GM23248 (cell line): ENCODE measurements at regions of chr5 and their contacts with region 1.

Region 1: DNA sequence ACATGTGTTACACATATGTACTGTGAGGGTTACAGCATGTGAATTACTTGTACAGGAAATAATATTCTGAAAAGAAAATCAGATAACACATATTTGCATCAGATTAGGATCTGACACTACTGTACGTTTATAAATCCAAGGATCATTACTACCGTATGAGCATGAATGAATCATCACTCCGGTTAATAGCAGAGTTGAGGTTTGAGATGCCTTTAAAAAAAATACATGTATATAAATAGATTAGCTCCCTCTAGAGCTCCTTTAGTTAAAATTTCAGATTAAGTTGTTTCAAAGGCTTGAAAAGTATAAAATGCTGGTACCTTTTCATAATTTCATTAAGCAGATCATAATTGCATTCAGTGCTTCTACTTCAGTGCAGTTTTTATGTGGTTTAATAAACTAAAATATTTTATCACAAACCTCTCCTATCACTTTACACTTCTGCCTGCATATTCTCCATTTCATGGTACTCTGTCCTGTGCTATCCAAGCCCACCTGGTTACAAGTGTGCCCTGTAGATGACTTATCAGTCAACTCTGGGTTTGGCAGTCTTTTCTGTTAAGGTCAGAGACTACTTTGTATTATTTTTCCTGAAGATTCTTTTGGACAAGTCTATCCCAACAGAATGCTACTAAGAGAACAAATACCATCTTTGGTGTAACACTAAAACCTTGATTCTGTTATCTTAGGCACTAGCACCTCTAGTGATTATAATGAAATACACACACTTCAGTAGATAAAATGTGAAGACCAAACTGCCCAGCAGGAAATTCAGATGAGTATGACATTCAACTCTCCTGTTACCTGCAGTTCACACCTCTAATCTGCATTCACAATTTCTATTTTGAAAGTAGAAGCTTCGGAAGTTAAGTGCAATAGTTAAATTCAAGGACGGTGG is 48.0 kb upstream of the POU5F2 start:
- DNase-seq: peak; percentile 85
- H3K4me3 ChIP-seq: no peak overlapping the region
- H3K27ac ChIP-seq: no peak overlapping the region
- H3K4me1 ChIP-seq: peaks cover 22% of the 10 kb centered on the region
- H3K27me3 ChIP-seq: no peaks in the 10 kb centered on the region

Region 2: GRCh38 chr5:92687821-92688722 is 1101.3 kb before region 1 on chr5:
- in situ Hi-C with region 1: loop called (anchors 25 kb)
- DNase-seq: peak; percentile 41
- H3K4me3 ChIP-seq: peak overlapping the region; percentile 53
- H3K27ac ChIP-seq: no peak overlapping the region
- H3K4me1 ChIP-seq: peaks cover 15% of the 10 kb centered on the region
- H3K27me3 ChIP-seq: no peaks in the 10 kb centered on the region

Region 3: GRCh38 chr5:92909602-92909962 is 879.8 kb before region 1 on chr5:
- in situ Hi-C with region 1: loop called (anchors 25 kb)
- DNase-seq: peak; percentile 18
- H3K4me3 ChIP-seq: no peak overlapping the region
- H3K27ac ChIP-seq: no peak overlapping the region
- H3K4me1 ChIP-seq: peaks cover 11% of the 10 kb centered on the region
- H3K27me3 ChIP-seq: no peaks in the 10 kb centered on the region

Region 4: DNA sequence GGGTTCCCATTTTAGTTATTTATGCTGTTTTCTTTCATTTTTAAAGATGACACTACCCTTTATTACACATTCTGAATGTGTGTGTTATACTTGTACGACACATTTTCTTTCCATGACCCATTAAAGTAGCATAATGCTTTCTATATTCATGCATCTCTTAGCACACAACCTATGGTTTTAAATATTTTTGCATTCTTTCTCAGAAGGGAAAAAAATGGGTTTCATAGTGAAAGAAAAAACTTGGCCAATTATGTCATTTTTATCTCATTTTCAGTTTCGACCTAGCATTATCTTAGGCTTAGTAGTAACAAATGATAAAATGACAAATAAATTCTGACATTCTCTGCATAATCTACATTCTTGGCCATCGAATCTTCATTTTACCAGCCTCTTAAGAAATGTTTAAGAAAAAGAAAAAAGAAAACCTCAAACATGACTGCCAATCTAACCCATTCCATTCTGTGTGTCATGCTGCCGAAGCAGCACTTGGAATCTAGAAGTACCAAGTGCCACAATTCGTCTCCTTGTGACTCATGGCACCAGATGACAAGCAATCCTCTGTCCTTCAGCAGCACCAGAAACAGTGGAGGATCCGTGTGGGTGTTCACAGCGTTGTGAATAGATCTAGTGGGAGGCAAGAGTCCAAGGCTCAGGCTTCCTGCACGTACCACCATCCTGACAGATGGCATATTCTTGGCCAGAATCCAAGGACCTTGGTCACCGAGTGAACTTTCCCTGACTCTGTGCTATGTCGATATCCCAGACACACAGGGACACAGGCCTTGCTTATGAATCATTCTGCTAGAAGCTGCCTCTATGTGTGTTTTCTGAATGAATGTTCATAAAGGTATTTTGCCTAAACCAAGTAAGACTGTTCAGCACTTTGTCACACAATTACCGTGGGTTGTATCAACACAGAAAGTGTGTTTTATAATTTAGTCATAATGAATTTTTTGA is 711.1 kb before region 1 on chr5:
- in situ Hi-C with region 1: loop called (anchors 25 kb)
- DNase-seq: peak; percentile 97
- H3K4me3 ChIP-seq: peak overlapping the region; percentile 47
- H3K27ac ChIP-seq: peak overlapping the region; percentile 62
- H3K4me1 ChIP-seq: peaks cover 49% of the 10 kb centered on the region
- H3K27me3 ChIP-seq: no peaks in the 10 kb centered on the region